Mammary epithelial cell (primary cell): ENCODE measurements at regions of chr6 and their contacts with region 1.

Region 1: DNA sequence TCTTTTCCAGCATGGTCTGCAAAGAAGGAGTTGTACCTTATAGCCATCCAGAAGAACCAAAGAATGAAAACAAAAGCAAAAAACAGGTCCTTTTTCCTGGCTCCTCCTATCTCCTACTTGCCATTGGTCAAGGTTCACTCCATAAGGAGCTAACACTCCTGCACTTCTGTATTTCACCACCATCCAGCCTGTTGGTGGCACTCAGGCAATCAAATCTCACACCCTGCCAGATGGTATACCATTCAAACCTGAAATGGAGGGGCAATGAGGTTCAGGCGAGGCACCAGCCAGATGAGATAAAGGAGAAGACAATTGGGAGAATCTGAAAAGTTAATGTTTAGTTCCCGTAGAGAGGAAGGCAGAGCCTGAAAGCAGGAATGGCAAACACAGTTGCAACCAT is 203.8 kb downstream of the ALDH8A1 start:
- DNase-seq: no peak
- H3K4me3 ChIP-seq: no peak overlapping the region
- H3K27ac ChIP-seq: no peak overlapping the region
- H3K4me1 ChIP-seq: no peaks in the 10 kb centered on the region
- H3K27me3 ChIP-seq: no peaks in the 10 kb centered on the region
- CTCF ChIP-seq: no peak

Region 2: GRCh38 chr6:134007077-134007476 is 739.1 kb before region 1 on chr6:
- CTCF ChIA-PET with region 1: no interaction called
- dilution Hi-C with region 1: no loop called
- in situ Hi-C with region 1: no loop called
- intact Hi-C with region 1: no loop called
- DNase-seq: peak; percentile 23
- H3K4me3 ChIP-seq: no peak overlapping the region
- H3K27ac ChIP-seq: no peak overlapping the region
- H3K4me1 ChIP-seq: peaks cover 4% of the 10 kb centered on the region
- H3K27me3 ChIP-seq: no peaks in the 10 kb centered on the region
- CTCF ChIP-seq: no peak

Region 3: GRCh38 chr6:134774201-134774638 is 28.1 kb after region 1 on chr6:
- CTCF ChIA-PET with region 1: no interaction called
- dilution Hi-C with region 1: no loop called
- in situ Hi-C with region 1: no loop called
- intact Hi-C with region 1: loop called (anchors 2 kb)
- DNase-seq: peak; percentile 81
- H3K4me3 ChIP-seq: no peak overlapping the region
- H3K27ac ChIP-seq: peak overlapping the region; percentile 1
- H3K4me1 ChIP-seq: peaks cover 25% of the 10 kb centered on the region
- H3K27me3 ChIP-seq: no peaks in the 10 kb centered on the region
- CTCF ChIP-seq: no peak